ENCODE measurements at regions of chr11 and their contacts with region 1.

Region 1: GRCh38 chr11:68383976-68384501 is 71.6 kb downstream of the LRP5 start:
- DNase-seq: peak; percentile 71 to 80
- H3K4me3 ChIP-seq: no peak overlapping the region
- H3K27ac ChIP-seq: peak overlapping the region in 3 of 5 donors; percentile 74 to 83 (median 81)
- H3K4me1 ChIP-seq: peaks cover 46 to 53% (median 53%) of the 10 kb centered on the region in 4 donors
- H3K27me3 ChIP-seq: no peaks in the 10 kb centered on the region
- CTCF ChIP-seq: peak in 5 of 7 experiments; percentile 80 to 97 (median 88)
- EP300 ChIP-seq: no peak
- POLR2A ChIP-seq: no peak

Region 2: GRCh38 chr11:68266121-68266891 is 117.7 kb before region 1 on chr11:
- intact Hi-C with region 1: loop called (anchors 10 kb)
- DNase-seq: peak in 1 of 2 donors; percentile 46
- H3K4me3 ChIP-seq: no peak overlapping the region
- H3K27ac ChIP-seq: peak overlapping the region in 3 of 5 donors; percentile 14 to 51 (median 22)
- H3K4me1 ChIP-seq: peaks cover 27 to 58% (median 54%) of the 10 kb centered on the region in 4 donors
- H3K27me3 ChIP-seq: no peaks in the 10 kb centered on the region
- CTCF ChIP-seq: no peak
- EP300 ChIP-seq: no peak
- POLR2A ChIP-seq: no peak

Region 3: GRCh38 chr11:68312117-68312779 is 71.8 kb before region 1 on chr11 and contains the start of gene LRP5:
- intact Hi-C with region 1: loop called (anchors 10 kb)
- DNase-seq: peak in 1 of 2 donors; percentile 86
- H3K4me3 ChIP-seq: peak within 1 kb of the TSS; percentile 71 to 86 (median 72)
- H3K27ac ChIP-seq: peak within 1 kb of the TSS; percentile 71 to 89 (median 83)
- H3K4me1 ChIP-seq: peaks cover 39 to 50% (median 45%) of the 10 kb centered on the region in 4 donors
- H3K27me3 ChIP-seq: peaks cover 0 to 11% (median 0%) of the 10 kb centered on the region in 3 donors
- CTCF ChIP-seq: no peak
- EP300 ChIP-seq: no peak
- POLR2A ChIP-seq: no peak
- total RNA-seq, gene LRP5: 36.5 to 152 (median 64.7) TPM

Measured in stomach (tissue), 19 donors.